BJ (cell line): ENCODE measurements at regions of chr15 and their contacts with region 1.

Region 1: DNA sequence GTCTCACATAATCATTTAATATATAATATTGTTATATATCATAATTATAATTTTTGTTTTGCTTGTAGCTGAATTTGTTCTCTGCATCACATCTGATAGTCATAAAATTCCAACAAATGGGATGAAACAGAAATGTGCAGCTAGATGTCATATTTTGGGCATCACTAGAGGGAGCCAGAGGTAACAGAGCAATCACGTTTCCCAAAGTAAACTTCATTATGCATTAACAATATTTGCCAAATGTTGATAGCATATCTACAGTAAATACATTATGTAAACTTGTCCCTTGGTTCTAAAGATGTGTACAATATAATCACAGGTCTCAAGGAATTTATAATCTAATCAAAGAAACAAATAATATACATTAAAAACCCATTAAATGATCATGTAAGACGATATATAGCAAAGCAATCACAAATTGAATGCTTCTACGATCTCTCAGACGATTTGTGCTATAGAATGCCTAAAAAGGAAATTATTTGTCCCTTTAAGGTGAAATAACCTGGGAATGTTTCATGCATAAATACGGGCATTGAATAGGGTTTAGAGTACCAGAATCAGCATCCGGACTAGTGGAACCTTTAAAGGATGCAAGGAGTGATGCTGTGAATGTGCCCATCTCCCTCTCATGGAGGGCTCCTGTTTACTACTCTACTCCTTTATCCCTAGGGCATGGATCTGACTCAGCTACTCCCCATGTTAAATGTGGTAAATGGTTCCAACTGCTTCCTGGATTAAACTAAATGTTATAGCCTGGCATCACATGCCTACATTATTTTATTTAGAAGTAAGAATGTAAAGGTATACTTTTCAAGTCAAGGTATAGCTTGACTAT is 234.1 kb upstream of the MCTP2 start:
- DNase-seq: no peak
- H3K4me3 ChIP-seq: no peak overlapping the region
- H3K27me3 ChIP-seq: no peaks in the 10 kb centered on the region
- CTCF ChIP-seq: peak; percentile 77

Region 2: GRCh38 chr15:94033683-94034020 is 36.4 kb after region 1 on chr15:
- CTCF ChIA-PET with region 1: no interaction called
- POLR2A ChIA-PET with region 1: no interaction called
- DNase-seq: no peak
- H3K4me3 ChIP-seq: no peak overlapping the region
- H3K27me3 ChIP-seq: no peaks in the 10 kb centered on the region
- CTCF ChIP-seq: no peak

Region 3: GRCh38 chr15:94125156-94125555 is 127.9 kb after region 1 on chr15:
- CTCF ChIA-PET with region 1: interaction called, 66 read pairs
- POLR2A ChIA-PET with region 1: no interaction called
- DNase-seq: peak; percentile 31
- H3K4me3 ChIP-seq: no peak overlapping the region
- H3K27me3 ChIP-seq: no peaks in the 10 kb centered on the region; the same call in 1 of the 2 replicates
- CTCF ChIP-seq: no peak